CD4-positive, alpha-beta T cell (primary cell): ENCODE measurements at regions of chr2 and their contacts with region 1.

Region 1: DNA sequence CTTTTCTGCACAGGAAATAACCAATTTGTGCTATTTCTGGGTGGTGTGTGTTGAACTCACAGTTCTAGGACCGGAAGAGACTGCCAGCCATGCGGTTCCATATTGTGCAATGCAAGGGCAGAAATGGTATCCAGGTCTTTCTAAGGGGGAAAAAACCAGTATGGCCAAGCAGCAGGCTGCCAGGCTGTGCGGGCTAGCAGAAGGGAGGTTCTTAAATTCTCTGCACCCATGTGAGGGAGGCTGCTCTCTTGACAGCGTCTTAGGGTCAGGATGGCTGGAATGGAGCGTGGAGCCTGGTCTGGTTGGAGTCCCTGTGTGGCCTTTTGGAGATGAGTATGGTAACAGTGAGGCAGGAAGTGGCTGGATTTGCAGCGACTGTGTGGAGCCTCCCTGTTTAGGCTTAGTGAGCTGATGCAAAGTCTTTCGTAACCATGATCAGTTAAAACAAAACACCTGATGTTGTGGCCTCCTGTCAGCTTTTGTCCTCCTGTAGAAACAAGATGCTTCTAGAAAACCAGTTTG is 52.6 kb downstream of the NCK2 start:
- DNase-seq: peak in 4 of 14 experiments; percentile 51 to 84 (median 68)
- ATAC-seq: peak; percentile 24
- H3K4me3 ChIP-seq: peak overlapping the region; percentile 13
- H3K4me3 Mint-ChIP-seq: peak overlapping the region; percentile 77
- H3K27ac ChIP-seq: peak overlapping the region; percentile 52 to 81
- H3K27ac Mint-ChIP-seq: peak overlapping the region; percentile 98
- H3K4me1 ChIP-seq: peaks cover 88% of the 10 kb centered on the region
- H3K4me1 Mint-ChIP-seq: peaks cover 92% of the 10 kb centered on the region
- H3K27me3 ChIP-seq: no peaks in the 10 kb centered on the region
- H3K27me3 Mint-ChIP-seq: no peaks in the 10 kb centered on the region
- CTCF ChIP-seq: no peak

Region 2: GRCh38 chr2:105749583-105750400 is 47.6 kb before region 1 on chr2:
- CTCF ChIA-PET with region 1: interaction called, 5 read pairs
- POLR2A ChIA-PET with region 1: interaction called, 58 read pairs
- intact Hi-C with region 1: loop called in 1 of 2 experiments (anchors 2 kb)
- DNase-seq: peak in 5 of 14 experiments; percentile 24 to 61 (median 56)
- ATAC-seq: peak; percentile 2
- H3K4me3 ChIP-seq: peak overlapping the region; percentile 87
- H3K4me3 Mint-ChIP-seq: peak overlapping the region; percentile 83
- H3K27ac ChIP-seq: peak overlapping the region; percentile 52
- H3K27ac Mint-ChIP-seq: peak overlapping the region; percentile 98
- H3K4me1 ChIP-seq: peaks cover 78% of the 10 kb centered on the region
- H3K4me1 Mint-ChIP-seq: peaks cover 92% of the 10 kb centered on the region
- H3K27me3 ChIP-seq: no peaks in the 10 kb centered on the region
- H3K27me3 Mint-ChIP-seq: no peaks in the 10 kb centered on the region
- CTCF ChIP-seq: no peak

Region 3: DNA sequence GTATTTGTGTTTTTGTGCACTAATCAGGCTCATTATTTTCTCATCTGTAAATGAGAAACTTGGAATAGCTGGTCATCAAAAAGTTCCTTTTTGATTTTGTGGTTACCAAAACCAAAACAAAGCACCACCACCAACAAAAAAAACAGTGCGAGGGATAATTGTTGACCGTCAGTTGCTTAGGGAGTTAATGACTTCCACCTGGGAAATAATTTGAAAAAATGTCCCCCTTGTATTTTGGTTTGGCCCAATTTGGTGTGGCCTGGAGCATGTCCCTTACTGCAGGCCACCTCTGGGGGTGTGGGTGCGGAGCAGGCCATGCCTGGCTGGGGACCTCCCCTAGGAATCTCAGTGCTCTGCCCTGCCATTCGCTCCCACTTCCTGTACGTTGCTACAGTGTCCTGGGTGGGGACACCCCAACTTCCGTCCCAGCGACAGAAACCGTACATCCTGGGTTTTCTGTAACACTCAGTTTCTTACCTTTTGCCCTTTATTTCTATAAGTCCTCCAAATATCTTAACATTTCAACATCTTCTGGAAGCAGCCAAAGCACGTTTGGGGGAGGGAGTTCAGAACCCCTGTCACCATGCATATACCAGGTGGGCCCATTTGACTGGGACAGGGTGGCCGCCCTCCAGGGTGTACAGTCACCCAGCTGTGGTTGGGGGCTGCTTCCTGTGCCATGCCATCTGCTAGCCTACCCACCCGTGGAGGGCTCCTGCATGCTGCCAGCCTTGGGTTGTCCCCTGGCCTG is 21.4 kb before region 1 on chr2:
- CTCF ChIA-PET with region 1: no interaction called
- POLR2A ChIA-PET with region 1: interaction called, 26 read pairs
- intact Hi-C with region 1: no loop called
- DNase-seq: peak in 5 of 14 experiments; percentile 28 to 86 (median 68)
- ATAC-seq: peak; percentile 62
- H3K4me3 ChIP-seq: peak overlapping the region; percentile 41
- H3K4me3 Mint-ChIP-seq: peak overlapping the region; percentile 79
- H3K27ac ChIP-seq: peak overlapping the region; percentile 69 to 92
- H3K27ac Mint-ChIP-seq: peak overlapping the region; percentile 98
- H3K4me1 ChIP-seq: peaks cover 92% of the 10 kb centered on the region
- H3K4me1 Mint-ChIP-seq: peaks cover 94% of the 10 kb centered on the region
- H3K27me3 ChIP-seq: no peaks in the 10 kb centered on the region
- H3K27me3 Mint-ChIP-seq: no peaks in the 10 kb centered on the region
- CTCF ChIP-seq: no peak

Region 4: DNA sequence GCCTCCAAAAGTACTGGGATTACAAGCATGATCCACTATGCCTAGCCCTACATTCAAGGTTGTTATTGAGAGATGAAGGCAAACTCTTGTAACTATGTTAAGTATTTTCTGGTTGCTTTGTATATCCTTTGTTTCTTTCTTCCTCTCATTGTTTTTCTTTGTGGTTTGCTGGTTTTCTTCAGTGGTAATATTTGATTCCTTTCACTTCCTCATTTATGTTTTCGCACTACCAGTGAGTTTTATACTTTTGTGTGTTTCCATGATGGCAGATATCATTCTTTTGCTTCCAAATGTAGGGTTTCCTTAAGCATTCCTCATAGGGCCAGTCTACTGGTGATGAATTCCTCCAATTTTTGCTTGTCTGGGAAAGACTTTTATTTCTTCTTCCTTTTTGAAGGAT is 37.6 kb after region 1 on chr2:
- CTCF ChIA-PET with region 1: no interaction called
- POLR2A ChIA-PET with region 1: interaction called, 7 read pairs
- intact Hi-C with region 1: loop called in 1 of 2 experiments (anchors 5 kb)
- DNase-seq: peak in 3 of 14 experiments; percentile 40 to 73 (median 40)
- ATAC-seq: peak; percentile 29
- H3K4me3 ChIP-seq: no peak overlapping the region
- H3K4me3 Mint-ChIP-seq: peak overlapping the region; percentile 30
- H3K27ac ChIP-seq: peak overlapping the region in 1 of 2 donors; percentile 41
- H3K27ac Mint-ChIP-seq: peak overlapping the region; percentile 73
- H3K4me1 ChIP-seq: peaks cover 40% of the 10 kb centered on the region
- H3K4me1 Mint-ChIP-seq: peaks cover 83% of the 10 kb centered on the region
- H3K27me3 ChIP-seq: no peaks in the 10 kb centered on the region
- H3K27me3 Mint-ChIP-seq: no peaks in the 10 kb centered on the region
- CTCF ChIP-seq: no peak

Region 5: GRCh38 chr2:105929516-105929915 is 132.2 kb after region 1 on chr2:
- CTCF ChIA-PET with region 1: no interaction called
- POLR2A ChIA-PET with region 1: interaction called, 14 read pairs
- intact Hi-C with region 1: no loop called
- DNase-seq: peak; percentile 8 to 89 (median 52)
- ATAC-seq: peak; percentile 82
- H3K4me3 ChIP-seq: no peak overlapping the region
- H3K4me3 Mint-ChIP-seq: peak overlapping the region; percentile 47
- H3K27ac ChIP-seq: peak overlapping the region; percentile 19 to 42
- H3K27ac Mint-ChIP-seq: peak overlapping the region; percentile 81
- H3K4me1 ChIP-seq: peaks cover 95% of the 10 kb centered on the region
- H3K4me1 Mint-ChIP-seq: peaks cover 62% of the 10 kb centered on the region
- H3K27me3 ChIP-seq: no peaks in the 10 kb centered on the region
- H3K27me3 Mint-ChIP-seq: no peaks in the 10 kb centered on the region
- CTCF ChIP-seq: no peak

Region 6: DNA sequence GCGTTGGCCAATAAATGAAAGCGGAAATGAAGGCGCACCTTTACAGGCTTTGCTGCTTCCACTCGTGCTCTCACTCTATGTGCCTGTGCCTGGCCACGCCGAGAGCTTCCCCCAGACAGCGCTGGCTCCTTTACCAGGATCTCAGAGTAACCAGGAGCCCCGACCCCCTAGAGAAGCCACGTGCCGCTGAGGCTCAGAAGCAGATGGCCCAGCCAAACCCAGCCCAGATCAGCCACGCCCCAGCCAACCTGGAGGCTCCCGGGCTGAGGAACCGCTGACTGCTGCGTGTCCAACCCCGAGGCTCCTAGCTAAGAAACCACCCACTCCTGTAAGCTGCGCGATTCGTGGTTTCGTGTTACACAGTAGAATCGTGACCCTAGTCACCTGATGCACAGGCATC is 146.6 kb after region 1 on chr2:
- CTCF ChIA-PET with region 1: no interaction called
- POLR2A ChIA-PET with region 1: no interaction called
- intact Hi-C with region 1: no loop called
- DNase-seq: no peak
- ATAC-seq: no peak
- H3K4me3 ChIP-seq: no peak overlapping the region
- H3K4me3 Mint-ChIP-seq: no peak overlapping the region
- H3K27ac ChIP-seq: no peak overlapping the region
- H3K27ac Mint-ChIP-seq: no peak overlapping the region
- H3K4me1 ChIP-seq: peaks cover 2% of the 10 kb centered on the region
- H3K4me1 Mint-ChIP-seq: peaks cover 12% of the 10 kb centered on the region
- H3K27me3 ChIP-seq: no peaks in the 10 kb centered on the region
- H3K27me3 Mint-ChIP-seq: no peaks in the 10 kb centered on the region
- CTCF ChIP-seq: no peak